HEK293 (cell line): ENCODE measurements at regions of chr3 and their contacts with region 1.

Region 1: GRCh38 chr3:187223799-187224198 is 26.5 kb downstream of the RTP1 start:
- H3K4me3 ChIP-seq: no peak overlapping the region
- H3K27ac ChIP-seq: no peak overlapping the region
- H3K4me1 ChIP-seq: no peaks in the 10 kb centered on the region
- CTCF ChIP-seq: no peak

Region 2: DNA sequence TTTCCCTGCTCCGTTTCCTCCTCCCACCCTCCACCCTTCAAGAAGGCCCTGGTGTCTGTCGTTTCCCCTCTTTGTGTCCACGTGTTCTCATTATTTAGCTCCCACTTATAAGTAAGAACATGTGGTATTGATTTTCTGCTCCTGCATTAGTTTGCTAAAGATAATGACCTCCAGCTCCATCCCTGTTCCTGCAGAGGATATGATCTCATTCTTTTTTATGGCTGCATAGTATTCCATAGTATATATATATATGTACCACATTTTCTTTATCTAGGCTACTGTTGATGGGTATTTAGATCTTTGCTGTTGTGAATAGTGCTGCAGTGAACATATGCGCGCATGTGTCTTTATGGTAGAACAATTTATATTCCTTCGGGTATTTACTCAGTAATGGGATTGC is 288.7 kb before region 1 on chr3:
- CTCF ChIA-PET with region 1: no interaction called
- POLR2A ChIA-PET with region 1: no interaction called
- H3K4me3 ChIP-seq: no peak overlapping the region
- H3K27ac ChIP-seq: no peak overlapping the region
- H3K4me1 ChIP-seq: no peaks in the 10 kb centered on the region
- CTCF ChIP-seq: no peak

Region 3: GRCh38 chr3:187210545-187211327 is 13.1 kb before region 1 on chr3:
- CTCF ChIA-PET with region 1: interaction called, 14 read pairs
- POLR2A ChIA-PET with region 1: no interaction called
- H3K4me3 ChIP-seq: no peak overlapping the region
- H3K27ac ChIP-seq: no peak overlapping the region
- H3K4me1 ChIP-seq: no peaks in the 10 kb centered on the region
- CTCF ChIP-seq: no peak

Region 4: GRCh38 chr3:187265461-187265955 is 41.7 kb after region 1 on chr3:
- CTCF ChIA-PET with region 1: no interaction called
- POLR2A ChIA-PET with region 1: no interaction called
- H3K4me3 ChIP-seq: no peak overlapping the region
- H3K27ac ChIP-seq: no peak overlapping the region
- H3K4me1 ChIP-seq: peaks cover 3% of the 10 kb centered on the region
- CTCF ChIP-seq: no peak

Region 5: GRCh38 chr3:187352581-187353575 is 129.1 kb after region 1 on chr3:
- CTCF ChIA-PET with region 1: no interaction called
- POLR2A ChIA-PET with region 1: no interaction called
- H3K4me3 ChIP-seq: no peak overlapping the region
- H3K27ac ChIP-seq: no peak overlapping the region
- H3K4me1 ChIP-seq: no peaks in the 10 kb centered on the region
- CTCF ChIP-seq: no peak